ENCODE measurements at regions of chr5 and their contacts with region 1.

Region 1: DNA sequence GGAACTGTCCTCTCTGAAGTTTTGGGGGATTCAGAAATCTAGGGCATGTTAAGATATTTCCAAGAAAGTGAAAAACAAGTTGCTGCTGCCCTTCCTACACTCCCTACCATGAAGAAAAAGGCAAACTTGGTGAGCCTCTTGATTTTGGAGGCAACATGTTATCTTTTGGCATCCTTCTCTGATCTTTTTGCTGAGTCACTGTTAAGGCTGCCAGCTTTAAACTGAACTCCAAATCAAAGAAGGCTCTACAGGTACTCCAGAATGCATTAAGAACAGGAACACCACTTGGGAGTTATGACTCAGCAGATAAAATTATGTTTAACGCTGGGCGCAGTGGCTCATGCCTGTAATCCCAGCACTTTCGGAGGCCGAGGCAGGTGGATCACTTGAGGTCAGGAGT is 24.0 kb downstream of the PCDHB15 start:
- DNase-seq: no peak
- ATAC-seq: no peak

Region 2: DNA sequence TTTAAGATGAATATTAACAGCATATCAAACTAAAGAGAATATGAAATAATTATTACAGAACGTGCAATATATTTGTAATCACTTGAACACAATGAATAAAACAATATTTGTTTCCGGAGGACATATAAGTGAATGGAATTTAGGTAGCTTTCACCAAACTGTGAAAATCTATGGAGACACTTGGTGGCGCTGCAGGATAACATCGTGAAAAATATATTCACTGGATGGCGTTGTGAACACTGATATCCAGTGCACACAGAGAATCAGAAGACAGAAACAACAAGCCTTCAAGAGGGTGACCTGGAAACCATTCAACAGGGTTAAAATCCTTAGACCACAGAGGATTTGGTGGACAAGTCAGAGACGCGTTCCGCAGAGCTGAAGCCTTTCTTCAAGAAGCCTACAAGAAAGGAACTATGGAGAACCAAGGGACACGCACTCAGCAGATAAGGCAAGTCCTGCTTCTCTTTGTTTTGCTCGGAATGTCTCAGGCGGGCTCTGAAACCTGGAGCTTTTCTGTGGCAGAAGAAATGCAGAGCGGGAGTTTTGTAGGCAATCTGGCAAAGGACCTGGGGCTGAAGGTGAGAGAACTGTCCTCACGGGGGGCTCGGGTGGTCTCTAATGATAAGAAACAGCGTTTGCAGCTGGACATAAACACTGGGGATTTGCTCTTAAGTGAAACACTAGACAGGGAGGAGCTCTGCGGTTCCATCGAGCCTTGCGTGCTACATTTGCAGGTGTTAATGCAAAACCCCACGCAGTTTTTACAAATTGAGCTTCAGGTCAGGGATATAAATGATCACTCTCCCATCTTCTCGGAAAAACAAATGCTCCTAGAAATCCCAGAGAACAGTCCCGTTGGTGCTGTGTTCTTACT is 69.6 kb before region 1 on chr5 and contains the start of gene PCDHB11:
- intact Hi-C with region 1: no loop called
- DNase-seq: no peak
- ATAC-seq: no peak
- total RNA-seq, gene PCDHB11: 0.73 TPM

Region 3: DNA sequence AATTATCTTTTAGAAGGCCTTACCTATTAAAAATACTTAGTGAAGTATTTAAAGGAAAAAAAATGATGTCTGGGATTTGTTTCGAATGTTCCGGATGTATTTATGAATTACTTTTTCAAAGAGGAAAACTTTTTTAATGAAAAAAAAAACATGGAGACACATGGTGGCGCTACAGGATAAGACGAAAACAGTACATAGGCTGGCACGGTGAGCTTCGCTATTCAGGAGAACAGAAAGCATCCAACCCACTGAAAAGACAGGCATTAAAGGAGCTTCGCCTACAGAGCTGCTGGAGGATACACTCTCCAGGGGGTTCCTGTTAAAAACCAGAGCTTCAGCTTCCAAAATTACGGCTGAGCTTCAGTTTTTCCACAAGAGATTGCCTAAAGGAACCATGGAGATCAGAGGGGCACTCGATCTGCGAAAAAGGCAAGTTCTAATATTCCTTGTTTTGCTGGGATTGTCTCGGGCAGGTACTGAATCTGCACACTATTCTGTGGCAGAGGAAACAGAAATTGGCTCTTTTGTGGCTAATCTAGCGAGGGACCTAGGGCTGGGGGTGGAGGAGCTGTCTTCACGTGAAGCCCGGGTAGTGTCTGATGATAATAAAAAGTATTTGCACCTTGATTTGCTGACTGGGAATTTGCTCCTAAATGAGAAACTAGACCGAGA is 45.9 kb before region 1 on chr5 and contains the start of gene PCDHB14:
- intact Hi-C with region 1: no loop called
- DNase-seq: no peak
- ATAC-seq: peak; percentile 56
- total RNA-seq, gene PCDHB14: 3.3 TPM

Region 4: GRCh38 chr5:141303756-141304155 is 34.6 kb after region 1 on chr5 and contains the start of gene SLC25A2:
- intact Hi-C with region 1: loop called (anchors 5 kb)
- DNase-seq: no peak
- ATAC-seq: no peak
- total RNA-seq, gene SLC25A2: 0.16 TPM

Measured in Right ventricle myocardium superior (tissue), 1 donor.